CD8-positive, alpha-beta T cell (primary cell): ENCODE measurements at regions of chr3 and their contacts with region 1.

Region 1: GRCh38 chr3:71006810-71007785 is 576.4 kb downstream of the FOXP1 start:
- DNase-seq: peak in 2 of 9 experiments; percentile 44 to 64
- ATAC-seq: no peak
- H3K4me3 ChIP-seq: no peak overlapping the region
- H3K4me3 Mint-ChIP-seq: no peak overlapping the region
- H3K27ac ChIP-seq: no peak overlapping the region
- H3K27ac Mint-ChIP-seq: peak overlapping the region; percentile 85
- H3K4me1 ChIP-seq: peaks cover 54% of the 10 kb centered on the region
- H3K4me1 Mint-ChIP-seq: peaks cover 74% of the 10 kb centered on the region
- H3K27me3 ChIP-seq: no peaks in the 10 kb centered on the region
- H3K27me3 Mint-ChIP-seq: no peaks in the 10 kb centered on the region
- CTCF ChIP-seq: peak; percentile 30

Region 2: DNA sequence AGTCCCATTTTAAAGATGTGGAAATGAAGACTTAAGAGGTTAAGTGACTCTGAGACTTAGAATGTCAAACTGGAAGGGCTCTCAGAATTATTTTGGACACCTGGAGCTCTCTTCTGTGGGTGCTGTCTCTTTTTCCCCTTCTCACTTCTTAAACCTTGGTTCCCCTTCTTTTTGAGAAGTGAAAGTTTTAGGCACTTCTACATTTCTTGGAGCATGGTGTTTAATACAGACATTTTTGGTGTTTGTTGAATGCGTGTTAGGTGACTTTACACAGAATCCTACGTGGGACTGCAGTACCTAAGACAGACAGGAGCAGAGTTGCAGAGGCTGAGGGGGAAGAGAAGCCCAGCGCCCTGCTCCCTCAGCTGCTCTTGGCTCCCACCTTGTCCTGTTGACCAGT is 828.0 kb before region 1 on chr3:
- CTCF ChIA-PET with region 1: no interaction called
- POLR2A ChIA-PET with region 1: no interaction called
- intact Hi-C with region 1: no loop called
- DNase-seq: no peak
- ATAC-seq: no peak
- H3K4me3 ChIP-seq: no peak overlapping the region
- H3K4me3 Mint-ChIP-seq: no peak overlapping the region
- H3K27ac ChIP-seq: no peak overlapping the region
- H3K27ac Mint-ChIP-seq: no peak overlapping the region
- H3K4me1 ChIP-seq: no peaks in the 10 kb centered on the region
- H3K4me1 Mint-ChIP-seq: no peaks in the 10 kb centered on the region
- H3K27me3 ChIP-seq: no peaks in the 10 kb centered on the region
- H3K27me3 Mint-ChIP-seq: peaks cover 5% of the 10 kb centered on the region
- CTCF ChIP-seq: no peak

Region 3: DNA sequence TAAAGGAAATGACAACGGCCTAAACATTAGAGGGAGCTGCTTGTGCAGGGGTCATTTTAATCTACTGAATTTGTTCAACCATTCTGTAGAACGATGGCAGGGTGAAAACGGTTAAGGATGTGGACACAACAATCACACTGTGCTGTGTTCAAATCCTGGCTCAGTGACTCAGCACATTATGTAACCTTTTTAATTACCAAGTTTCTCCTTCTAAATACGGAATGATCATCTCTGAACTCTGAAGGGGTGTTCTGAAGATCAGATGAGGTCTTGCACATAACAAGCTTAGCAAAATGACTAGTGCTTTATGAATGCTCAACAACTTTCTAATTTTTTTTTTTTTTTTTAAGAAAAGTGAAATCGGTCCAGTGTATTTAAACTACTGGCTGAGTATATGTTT is 16.4 kb before region 1 on chr3:
- CTCF ChIA-PET with region 1: interaction called, 4 read pairs
- POLR2A ChIA-PET with region 1: interaction called, 5 read pairs
- intact Hi-C with region 1: loop called in 1 of 2 experiments (anchors 2 kb)
- DNase-seq: peak in 1 of 9 experiments; percentile 17
- ATAC-seq: peak; percentile 18
- H3K4me3 ChIP-seq: no peak overlapping the region
- H3K4me3 Mint-ChIP-seq: peak overlapping the region; percentile 35
- H3K27ac ChIP-seq: peak overlapping the region in 1 of 2 experiments; percentile 23
- H3K27ac Mint-ChIP-seq: peak overlapping the region; percentile 86
- H3K4me1 ChIP-seq: peaks cover 42% of the 10 kb centered on the region
- H3K4me1 Mint-ChIP-seq: peaks cover 60% of the 10 kb centered on the region
- H3K27me3 ChIP-seq: no peaks in the 10 kb centered on the region
- H3K27me3 Mint-ChIP-seq: no peaks in the 10 kb centered on the region
- CTCF ChIP-seq: no peak

Region 4: GRCh38 chr3:71026634-71027578 is 19.8 kb after region 1 on chr3:
- CTCF ChIA-PET with region 1: no interaction called
- POLR2A ChIA-PET with region 1: interaction called, 4 read pairs
- intact Hi-C with region 1: loop called in 1 of 2 experiments (anchors 2 kb)
- DNase-seq: no peak
- ATAC-seq: no peak
- H3K4me3 ChIP-seq: no peak overlapping the region
- H3K4me3 Mint-ChIP-seq: no peak overlapping the region
- H3K27ac ChIP-seq: no peak overlapping the region
- H3K27ac Mint-ChIP-seq: peak overlapping the region; percentile 7
- H3K4me1 ChIP-seq: peaks cover 32% of the 10 kb centered on the region
- H3K4me1 Mint-ChIP-seq: peaks cover 86% of the 10 kb centered on the region
- H3K27me3 ChIP-seq: no peaks in the 10 kb centered on the region
- H3K27me3 Mint-ChIP-seq: no peaks in the 10 kb centered on the region
- CTCF ChIP-seq: no peak

Region 5: GRCh38 chr3:71069797-71070196 is 62.7 kb after region 1 on chr3:
- CTCF ChIA-PET with region 1: interaction called, 17 read pairs
- POLR2A ChIA-PET with region 1: interaction called, 3 read pairs
- intact Hi-C with region 1: loop called (anchors 1 kb)
- DNase-seq: peak; percentile 57 to 81 (median 72)
- ATAC-seq: peak; percentile 29
- H3K4me3 ChIP-seq: no peak overlapping the region
- H3K4me3 Mint-ChIP-seq: no peak overlapping the region
- H3K27ac ChIP-seq: no peak overlapping the region
- H3K27ac Mint-ChIP-seq: peak overlapping the region; percentile 91
- H3K4me1 ChIP-seq: peaks cover 89% of the 10 kb centered on the region
- H3K4me1 Mint-ChIP-seq: peaks cover 84% of the 10 kb centered on the region
- H3K27me3 ChIP-seq: no peaks in the 10 kb centered on the region
- H3K27me3 Mint-ChIP-seq: no peaks in the 10 kb centered on the region
- CTCF ChIP-seq: peak; percentile 67

Region 6: DNA sequence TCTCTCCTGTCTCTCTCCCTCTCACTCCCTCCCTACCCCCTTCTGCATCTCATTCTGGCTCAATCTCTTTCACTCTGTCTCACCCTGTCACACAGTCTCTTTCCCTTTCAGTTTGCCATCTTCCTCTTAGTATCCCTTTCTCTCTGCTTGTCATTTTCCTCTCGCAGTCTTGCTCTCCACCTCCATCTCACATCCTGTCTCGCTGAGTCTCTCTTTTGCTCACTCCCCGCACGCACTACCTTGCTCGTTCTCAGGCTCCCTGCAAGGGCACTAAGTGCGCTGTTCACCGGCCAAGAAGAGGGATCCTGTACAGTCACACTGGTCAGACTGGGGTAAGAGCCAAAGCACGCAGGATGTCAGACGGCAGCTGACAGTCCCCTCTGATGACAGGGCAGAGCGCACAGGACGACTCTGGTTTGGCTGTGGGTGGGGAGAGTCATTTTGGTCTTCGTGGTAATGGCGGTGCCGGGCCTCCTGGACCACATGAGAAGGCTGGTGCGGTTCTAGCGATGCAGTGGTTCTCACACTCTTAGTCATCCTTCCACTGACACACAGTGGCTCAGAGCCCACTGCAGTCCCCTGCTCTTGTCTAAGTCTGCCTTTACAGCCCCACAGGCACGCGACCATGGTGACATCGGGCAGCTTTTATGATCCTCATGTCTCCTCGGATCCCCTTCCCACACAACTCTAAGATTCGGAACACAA is 219.6 kb after region 1 on chr3:
- CTCF ChIA-PET with region 1: no interaction called
- POLR2A ChIA-PET with region 1: no interaction called
- intact Hi-C with region 1: loop called in 1 of 2 experiments (anchors 5 kb)
- DNase-seq: peak; percentile 57 to 88 (median 81)
- ATAC-seq: peak; percentile 75
- H3K4me3 ChIP-seq: peak overlapping the region; percentile 0 to 43
- H3K4me3 Mint-ChIP-seq: peak overlapping the region; percentile 73
- H3K27ac ChIP-seq: peak overlapping the region; percentile 18 to 63
- H3K27ac Mint-ChIP-seq: peak overlapping the region; percentile 97
- H3K4me1 ChIP-seq: peaks cover 56% of the 10 kb centered on the region
- H3K4me1 Mint-ChIP-seq: peaks cover 82% of the 10 kb centered on the region
- H3K27me3 ChIP-seq: no peaks in the 10 kb centered on the region
- H3K27me3 Mint-ChIP-seq: no peaks in the 10 kb centered on the region
- CTCF ChIP-seq: no peak